GM12878 (cell line): ENCODE measurements at regions of chr15 and their contacts with region 1.

Region 1: DNA sequence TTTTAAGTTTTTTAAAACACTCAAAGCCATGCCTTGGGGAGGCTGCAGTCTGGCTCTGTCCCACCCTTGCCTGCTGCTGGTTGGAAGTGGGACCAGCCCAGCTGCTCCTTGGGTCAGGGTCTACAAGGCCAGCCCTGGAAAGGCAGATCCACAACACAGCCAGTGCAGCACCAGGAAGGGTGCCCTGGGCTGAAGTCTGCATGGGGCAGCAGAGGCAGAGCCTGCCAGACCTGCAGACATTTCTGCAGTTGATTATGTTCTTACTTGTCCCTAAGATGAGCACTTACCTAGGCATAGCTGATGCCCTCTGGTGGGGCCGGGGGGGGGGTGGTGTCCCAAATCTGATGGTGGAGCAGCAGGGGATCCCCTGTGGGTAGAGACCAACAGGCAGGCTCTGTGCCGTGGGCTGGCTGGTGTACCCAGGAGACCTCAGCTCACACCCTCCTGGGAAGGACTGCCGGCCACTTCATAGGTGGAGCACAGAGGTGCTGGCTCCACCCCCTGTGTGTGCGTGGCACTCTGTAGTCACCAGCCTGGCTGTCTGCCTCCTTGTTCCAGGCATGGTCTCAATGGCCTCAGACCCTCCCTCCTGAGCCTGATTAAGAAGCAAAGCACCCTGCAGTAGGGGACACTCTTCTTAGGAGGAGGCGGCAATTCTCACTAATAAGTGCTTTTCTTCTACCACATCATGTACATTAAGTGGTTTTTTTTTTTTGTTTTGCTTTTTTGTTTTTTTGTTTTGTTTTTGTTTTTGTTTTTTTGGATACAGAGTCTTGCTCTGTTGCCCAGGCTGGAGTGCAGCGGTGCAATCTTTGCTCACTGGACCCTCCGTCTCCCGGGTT is 97.4 kb upstream of the KLF13 start:
- DNase-seq: peak; percentile 91
- ATAC-seq: peak; percentile 83
- H3K4me3 ChIP-seq: peak overlapping the region; percentile 86
- H3K27ac ChIP-seq: peak overlapping the region; percentile 80
- H3K4me1 ChIP-seq: peaks cover 37% of the 10 kb centered on the region
- H3K27me3 ChIP-seq: no peaks in the 10 kb centered on the region
- CTCF ChIP-seq: no peak
- EP300 ChIP-seq: 0 out of 4 replicates have a peak, but pooled peaks of 1 of the 2 experiments have one; percentile 27
- POLR2A ChIP-seq: peak; percentile 85
- RAD21 ChIP-seq: no peak

Region 2: GRCh38 chr15:30791239-30792175 is 437.7 kb before region 1 on chr15:
- CTCF ChIA-PET with region 1: no interaction called
- POLR2A ChIA-PET with region 1: no interaction called
- RAD21 ChIA-PET with region 1: no interaction called
- SMC1A ChIA-PET with region 1: no interaction called
- in situ Hi-C with region 1: no loop called
- intact Hi-C with region 1: no loop called
- DNase-seq: no peak
- ATAC-seq: no peak
- H3K4me3 ChIP-seq: no peak overlapping the region
- H3K27ac ChIP-seq: no peak overlapping the region
- H3K4me1 ChIP-seq: no peaks in the 10 kb centered on the region
- H3K27me3 ChIP-seq: no peaks in the 10 kb centered on the region
- CTCF ChIP-seq: no peak
- EP300 ChIP-seq: no peak
- POLR2A ChIP-seq: no peak
- RAD21 ChIP-seq: no peak

Region 3: DNA sequence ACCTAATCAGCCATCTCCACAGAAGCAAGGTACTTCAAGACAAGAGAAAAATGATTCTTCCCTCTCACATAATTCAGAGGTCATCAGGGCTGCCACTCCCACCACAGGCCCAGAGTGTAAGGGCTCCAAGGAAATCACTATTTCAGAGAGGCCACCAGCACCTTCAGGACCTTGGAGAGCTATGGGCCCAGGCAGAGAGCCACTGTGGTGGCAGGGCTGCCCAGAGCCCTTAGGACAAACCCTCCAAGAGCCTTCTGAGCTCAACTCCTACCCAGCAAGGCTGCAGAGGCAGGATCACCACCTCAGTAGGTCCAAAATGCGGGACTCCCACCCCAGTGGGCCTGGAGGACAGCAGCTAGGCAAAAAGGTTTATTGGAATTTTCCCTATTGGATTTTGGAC is 343.4 kb before region 1 on chr15:
- CTCF ChIA-PET with region 1: no interaction called
- POLR2A ChIA-PET with region 1: no interaction called
- RAD21 ChIA-PET with region 1: no interaction called
- SMC1A ChIA-PET with region 1: no interaction called
- in situ Hi-C with region 1: no loop called
- intact Hi-C with region 1: no loop called
- DNase-seq: no peak
- ATAC-seq: 0 out of 3 replicates have a peak, but pooled peaks have one; percentile 30
- H3K4me3 ChIP-seq: no peak overlapping the region
- H3K27ac ChIP-seq: no peak overlapping the region
- H3K4me1 ChIP-seq: no peaks in the 10 kb centered on the region
- H3K27me3 ChIP-seq: no peaks in the 10 kb centered on the region
- CTCF ChIP-seq: no peak
- EP300 ChIP-seq: no peak
- POLR2A ChIP-seq: no peak
- RAD21 ChIP-seq: no peak

Region 4: DNA sequence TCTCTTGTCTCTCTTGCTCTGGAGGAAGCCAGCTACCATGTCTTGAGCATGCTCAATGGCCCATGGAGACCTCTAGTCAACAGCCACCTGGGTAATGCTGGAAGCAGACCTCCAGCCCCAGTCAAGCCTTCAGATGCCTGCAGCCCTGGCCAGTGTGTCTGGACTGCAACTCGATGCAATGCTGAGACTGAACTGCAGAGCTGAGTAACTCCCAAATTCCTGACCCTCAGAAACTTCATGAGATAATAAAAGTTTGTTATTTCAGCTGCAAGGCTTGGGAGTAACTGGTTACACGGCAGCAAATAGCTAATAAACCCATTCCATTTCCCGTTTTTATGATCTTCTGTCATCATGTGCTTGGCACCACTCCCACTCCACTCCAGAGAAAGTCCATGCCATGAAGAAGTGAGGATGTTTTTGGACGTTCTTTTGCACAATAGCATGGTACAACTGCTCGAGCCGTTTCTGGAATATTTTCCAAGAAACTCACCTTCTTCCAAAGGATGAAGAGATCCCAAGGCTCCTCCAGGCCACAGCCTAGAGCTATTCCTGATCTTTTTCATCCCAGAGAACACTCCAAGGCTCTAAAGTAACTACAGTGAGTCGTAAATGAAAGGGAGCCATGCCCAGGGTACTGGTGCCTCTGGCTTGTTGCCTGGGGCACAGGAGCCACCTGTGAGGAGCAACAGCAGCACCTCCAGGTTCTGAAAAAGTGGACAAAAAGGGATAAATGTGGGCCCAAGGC is 25.4 kb after region 1 on chr15:
- CTCF ChIA-PET with region 1: interaction called, 22 read pairs
- POLR2A ChIA-PET with region 1: interaction called, 32 read pairs
- RAD21 ChIA-PET with region 1: interaction called, 75 read pairs
- SMC1A ChIA-PET with region 1: interaction called, 134 read pairs
- in situ Hi-C with region 1: no loop called
- intact Hi-C with region 1: loop called (anchors 2 kb)
- DNase-seq: no peak
- ATAC-seq: no peak
- H3K4me3 ChIP-seq: no peak overlapping the region
- H3K27ac ChIP-seq: peak overlapping the region; percentile 76
- H3K4me1 ChIP-seq: peaks cover 38% of the 10 kb centered on the region
- H3K27me3 ChIP-seq: no peaks in the 10 kb centered on the region
- CTCF ChIP-seq: no peak
- EP300 ChIP-seq: no peak
- POLR2A ChIP-seq: no peak
- RAD21 ChIP-seq: no peak

Region 5: DNA sequence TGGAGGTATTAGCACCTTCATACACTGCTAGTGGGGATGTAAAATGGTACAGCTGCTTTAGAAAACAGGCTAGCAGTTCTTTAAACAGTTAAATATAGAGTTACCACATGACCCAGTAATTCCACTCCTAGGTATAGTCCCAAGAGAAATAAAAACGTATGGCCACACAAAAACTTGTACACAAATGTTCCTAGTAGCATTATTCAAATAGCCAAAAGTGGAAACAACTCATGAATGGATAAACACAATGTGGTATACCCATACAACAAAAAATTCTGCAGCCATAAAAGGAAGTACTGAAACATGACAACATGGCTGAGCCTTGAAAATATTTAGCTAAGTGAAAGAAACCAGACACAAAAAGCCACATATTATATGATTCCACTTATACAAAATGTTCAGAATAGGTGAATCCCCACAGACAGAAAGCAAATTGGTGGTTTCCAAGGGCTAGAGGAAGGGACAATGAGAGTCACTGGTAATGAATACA is 56.6 kb after region 1 on chr15:
- CTCF ChIA-PET with region 1: interaction called, 3 read pairs
- POLR2A ChIA-PET with region 1: interaction called, 5 read pairs
- RAD21 ChIA-PET with region 1: interaction called, 17 read pairs
- SMC1A ChIA-PET with region 1: interaction called, 14 read pairs
- in situ Hi-C with region 1: no loop called
- intact Hi-C with region 1: no loop called
- DNase-seq: peak; percentile 49
- ATAC-seq: peak; percentile 95
- H3K4me3 ChIP-seq: no peak overlapping the region
- H3K27ac ChIP-seq: peak overlapping the region; percentile 48
- H3K4me1 ChIP-seq: no peaks in the 10 kb centered on the region
- H3K27me3 ChIP-seq: no peaks in the 10 kb centered on the region
- CTCF ChIP-seq: no peak
- EP300 ChIP-seq: peak in 1 of 2 experiments; percentile 48; a peak in 1 of 4 replicates
- POLR2A ChIP-seq: no peak
- RAD21 ChIP-seq: no peak

Region 6: GRCh38 chr15:31332020-31332680 is 102.9 kb after region 1 on chr15:
- CTCF ChIA-PET with region 1: interaction called, 4 read pairs
- POLR2A ChIA-PET with region 1: interaction called, 5 read pairs
- RAD21 ChIA-PET with region 1: interaction called, 56 read pairs
- SMC1A ChIA-PET with region 1: interaction called, 5 read pairs
- in situ Hi-C with region 1: loop called (anchors 5 kb)
- intact Hi-C with region 1: no loop called
- DNase-seq: no peak
- ATAC-seq: no peak
- H3K4me3 ChIP-seq: peak overlapping the region; percentile 91
- H3K27ac ChIP-seq: peak overlapping the region; percentile 62
- H3K4me1 ChIP-seq: peaks cover 63% of the 10 kb centered on the region
- H3K27me3 ChIP-seq: no peaks in the 10 kb centered on the region
- CTCF ChIP-seq: no peak
- EP300 ChIP-seq: no peak
- POLR2A ChIP-seq: no peak
- RAD21 ChIP-seq: no peak